ENCODE measurements at regions of chr2 and their contacts with region 1.

Region 1: DNA sequence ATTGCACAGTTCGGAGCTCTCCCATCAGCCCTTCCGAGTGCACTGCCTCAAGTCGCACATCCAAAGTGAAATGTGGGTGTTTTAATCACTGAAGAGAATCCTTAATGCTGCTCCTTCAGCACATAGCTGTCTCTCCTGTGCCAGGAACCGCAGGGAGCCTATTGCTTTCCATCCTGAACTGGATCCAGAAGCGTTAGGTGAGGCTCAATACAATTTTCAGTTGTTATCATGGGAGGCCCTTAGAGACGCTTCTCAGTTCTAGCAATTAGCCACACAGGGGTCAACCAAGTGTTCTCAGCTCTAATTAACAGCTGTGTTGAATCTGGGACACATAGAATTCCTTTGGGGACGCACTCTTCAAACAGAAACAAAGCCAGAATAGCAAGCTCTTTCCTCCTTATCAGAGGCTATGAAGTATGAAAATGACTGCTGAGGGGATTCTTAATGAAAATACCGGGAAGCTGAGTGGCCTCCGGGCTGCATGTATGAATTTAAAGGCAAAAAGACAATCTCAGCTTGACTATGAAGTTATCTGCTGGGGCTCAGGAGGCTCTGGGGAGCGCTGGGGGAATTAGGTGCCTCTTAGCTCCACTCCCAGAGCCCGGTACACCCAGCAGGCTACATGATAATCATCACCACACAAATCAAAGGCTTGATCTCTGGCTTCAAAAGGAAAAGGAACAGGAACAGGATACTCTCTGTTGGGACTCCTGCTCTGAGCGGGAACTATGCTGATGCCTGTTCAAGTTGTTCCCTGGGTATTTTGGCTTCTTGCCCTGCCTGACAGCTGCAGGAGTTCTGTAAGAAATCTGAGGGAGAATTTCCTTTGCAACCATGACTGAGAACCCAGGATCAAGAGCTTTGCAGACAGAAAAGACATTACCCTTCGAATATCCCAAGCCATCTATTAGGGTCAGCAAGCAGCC is 55.4 kb upstream of the NCOA1 start:
- DNase-seq: peak in 4 of 5 donors; percentile 85 to 91 (median 87)
- ATAC-seq: peak; percentile 75 to 89 (median 87)
- H3K4me3 ChIP-seq: peak overlapping the region in 7 of 12 donors; percentile 11 to 30 (median 17)
- H3K27ac ChIP-seq: peak overlapping the region; percentile 40 to 80 (median 66)
- H3K4me1 ChIP-seq: peaks cover 4 to 50% (median 32%) of the 10 kb centered on the region in 12 donors
- H3K27me3 ChIP-seq: no peaks in the 10 kb centered on the region
- CTCF ChIP-seq: no peak
- POLR2A ChIP-seq: no peak

Region 2: GRCh38 chr2:24559475-24560109 is 123.9 kb after region 1 on chr2:
- intact Hi-C with region 1: loop called in 1 of 10 experiments (anchors 10 kb)
- DNase-seq: no peak
- ATAC-seq: peak in 3 of 4 donors; percentile 29 to 72 (median 69)
- H3K4me3 ChIP-seq: no peak overlapping the region
- H3K27ac ChIP-seq: peak overlapping the region in 2 of 12 donors; percentile 13 to 19
- H3K4me1 ChIP-seq: peaks cover 0 to 43% (median 21%) of the 10 kb centered on the region in 12 donors
- H3K27me3 ChIP-seq: no peaks in the 10 kb centered on the region
- CTCF ChIP-seq: no peak
- POLR2A ChIP-seq: no peak

Measured in heart left ventricle (tissue), 16 donors.